Activated T-helper 2 cell treated with anti-CD3 and anti-CD28 coated beads, Interferon-gamma antibody, Interleukin-2, Interleukin-4, amounts not matched to agents 10 μg/mL and 5 μg/mL and 100 μg/mL, durations not matched to agents 14 hours and 24 hours and 36 hours (primary cell): ENCODE measurements at regions of chr5 and their contacts with region 1.

Region 1: GRCh38 chr5:88845081-88845697 is 37.8 kb downstream of the MEF2C start:
- DNase-seq: no peak
- H3K4me3 Mint-ChIP-seq: no peak overlapping the region
- H3K27ac Mint-ChIP-seq: no peak overlapping the region
- H3K4me1 Mint-ChIP-seq: peaks cover 7% of the 10 kb centered on the region
- H3K27me3 Mint-ChIP-seq: peaks cover 26% of the 10 kb centered on the region

Region 2: GRCh38 chr5:88826646-88827585 is 18.3 kb before region 1 on chr5:
- intact Hi-C with region 1: loop called (anchors 1 kb)
- DNase-seq: no peak
- H3K4me3 Mint-ChIP-seq: no peak overlapping the region
- H3K27ac Mint-ChIP-seq: peak overlapping the region; percentile 68
- H3K4me1 Mint-ChIP-seq: peaks cover 30% of the 10 kb centered on the region
- H3K27me3 Mint-ChIP-seq: peaks cover 29% of the 10 kb centered on the region

Region 3: DNA sequence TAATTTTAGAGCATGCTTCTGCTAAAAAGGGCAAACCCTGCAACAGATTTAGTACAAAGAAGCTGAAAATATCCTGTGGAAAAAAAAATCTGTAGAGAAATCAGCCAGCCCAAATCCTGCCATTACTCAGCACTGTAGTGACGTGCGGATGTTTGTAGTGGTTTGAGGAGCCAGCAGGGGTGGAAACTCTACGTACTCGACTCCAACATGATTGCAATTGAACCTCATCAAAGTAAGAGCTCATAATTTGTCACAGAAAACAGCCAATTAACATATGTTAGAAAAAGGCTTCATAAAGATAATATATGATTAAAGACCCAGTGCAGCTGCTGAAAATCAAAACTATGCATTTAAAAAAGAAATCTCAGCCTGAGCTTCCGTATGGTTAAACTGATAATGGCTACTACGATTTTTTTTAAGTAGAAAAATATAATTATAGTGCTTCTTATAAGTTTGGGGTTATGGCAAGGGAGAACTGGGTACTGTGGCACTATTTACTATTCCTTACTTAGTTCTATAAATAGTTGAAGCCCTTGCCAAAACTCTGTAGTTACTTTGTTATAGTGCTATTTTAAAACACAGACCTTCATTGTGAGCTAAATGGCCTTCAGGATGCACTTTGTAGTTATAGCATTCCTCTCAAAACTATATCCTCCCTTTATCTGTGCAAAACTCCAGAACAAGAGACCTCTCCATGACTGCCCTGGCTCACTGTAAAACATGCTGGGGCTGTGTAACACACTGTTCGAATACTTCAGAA is 11.6 kb before region 1 on chr5:
- intact Hi-C with region 1: loop called (anchors 1 kb)
- DNase-seq: no peak
- H3K4me3 Mint-ChIP-seq: no peak overlapping the region
- H3K27ac Mint-ChIP-seq: no peak overlapping the region
- H3K4me1 Mint-ChIP-seq: peaks cover 17% of the 10 kb centered on the region
- H3K27me3 Mint-ChIP-seq: peaks cover 12% of the 10 kb centered on the region